K562 (cell line): ENCODE measurements at regions of chr3 and their contacts with region 1.

Region 1: DNA sequence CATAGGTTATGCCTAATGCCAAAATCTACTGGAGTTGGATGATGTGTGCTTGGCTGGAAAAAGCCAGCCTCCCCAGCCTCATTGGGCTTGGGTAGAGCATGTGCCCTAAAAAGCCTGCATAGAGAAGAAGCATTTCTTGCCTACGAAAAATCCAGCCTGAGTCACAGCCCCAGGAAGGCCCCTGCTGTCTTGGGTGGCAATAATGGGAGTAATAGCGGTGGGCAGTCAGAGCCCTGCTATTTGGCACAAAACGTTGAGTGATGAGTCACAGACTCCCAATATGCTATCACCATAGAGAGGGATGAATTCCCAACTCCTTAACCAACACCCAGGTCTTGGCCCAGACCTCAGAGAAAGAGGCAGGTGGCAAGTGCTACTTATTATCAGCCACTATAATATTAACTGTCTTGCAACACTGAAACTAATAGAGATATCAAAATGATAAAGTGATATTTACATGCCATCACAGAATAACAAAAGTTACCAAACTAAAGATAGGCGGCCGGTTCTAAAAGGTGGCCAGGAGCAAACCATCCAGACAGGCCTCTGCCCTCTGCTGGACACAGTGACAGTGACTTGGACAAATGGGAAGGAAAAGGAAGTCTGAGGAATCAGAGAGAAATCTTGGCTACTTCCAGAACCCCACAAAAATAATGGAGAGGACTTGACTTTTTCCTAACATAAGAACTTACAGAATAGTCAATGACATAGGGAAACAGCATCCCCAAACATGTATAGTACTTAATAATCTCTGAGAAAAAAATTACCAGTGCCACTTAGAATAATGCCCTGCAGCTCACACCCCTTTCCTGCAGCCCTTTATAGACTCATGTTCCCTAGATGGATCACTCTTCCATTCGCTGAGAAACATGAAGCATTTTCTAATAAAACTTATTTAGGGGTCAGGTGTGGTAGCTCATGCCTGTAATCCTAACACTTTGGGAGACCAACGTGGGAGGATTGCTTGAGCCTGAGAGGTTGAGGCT is 51.9 kb upstream of the MUC13 start:
- DNase-seq: peak in 3 of 4 experiments; percentile 11 to 23 (median 17)
- ATAC-seq: peak; percentile 69; the same call in 2 of the 3 replicates
- H3K4me3 ChIP-seq: no peak overlapping the region
- H3K27ac ChIP-seq: no peak overlapping the region
- H3K4me1 ChIP-seq: no peaks in the 10 kb centered on the region
- H3K27me3 ChIP-seq: peaks cover 4 to 12% of the 10 kb centered on the region in 2 experiments; a peak in 3 of 5 replicates
- CTCF ChIP-seq: peak; percentile 35 to 50 (median 44); a peak in 5 of 6 replicates
- EP300 ChIP-seq: no peak
- POLR2A ChIP-seq: no peak
- RAD21 ChIP-seq: peak in 1 of 2 experiments; percentile 39; a peak in 1 of 4 replicates

Region 2: DNA sequence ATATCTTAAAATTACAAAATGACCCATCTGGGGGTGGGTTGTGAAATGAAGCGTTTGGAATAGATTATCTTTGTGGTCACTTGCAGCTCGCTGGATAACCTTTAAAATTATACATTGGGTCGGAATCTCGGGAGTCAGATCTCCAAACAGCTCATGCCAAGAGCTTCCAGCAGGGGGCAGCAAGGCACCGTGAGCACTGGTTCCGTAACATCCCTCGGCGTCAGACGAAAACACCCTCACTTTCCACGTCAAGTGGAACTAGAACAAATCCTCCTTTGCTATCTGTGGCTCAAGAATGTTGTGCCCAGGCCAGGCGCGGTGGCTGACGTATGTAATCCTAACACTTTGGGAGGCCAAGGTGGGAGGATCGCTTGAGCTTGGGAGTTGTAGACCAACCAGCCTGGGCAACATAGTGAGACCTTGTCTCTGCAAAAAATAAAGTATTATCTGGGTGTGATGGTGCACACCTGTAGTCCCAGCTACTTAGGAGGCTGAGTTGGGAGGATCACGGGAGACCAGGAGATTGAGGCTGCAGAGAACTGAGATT is 225.1 kb before region 1 on chr3:
- CTCF ChIA-PET with region 1: no interaction called
- POLR2A ChIA-PET with region 1: no interaction called
- in situ Hi-C with region 1: no loop called
- intact Hi-C with region 1: loop called (anchors 10 kb)
- DNase-seq: peak; percentile 62 to 77 (median 66)
- ATAC-seq: peak; percentile 91
- H3K4me3 ChIP-seq: no peak overlapping the region
- H3K27ac ChIP-seq: no peak overlapping the region
- H3K4me1 ChIP-seq: no peaks in the 10 kb centered on the region; a peak in 1 of 5 replicates
- H3K27me3 ChIP-seq: no peaks in the 10 kb centered on the region
- CTCF ChIP-seq: peak; percentile 83 to 88 (median 86)
- EP300 ChIP-seq: no peak
- POLR2A ChIP-seq: no peak
- RAD21 ChIP-seq: peak; percentile 81 to 89

Region 3: GRCh38 chr3:124928333-124929202 is 57.9 kb before region 1 on chr3:
- CTCF ChIA-PET with region 1: no interaction called
- POLR2A ChIA-PET with region 1: no interaction called
- in situ Hi-C with region 1: no loop called
- intact Hi-C with region 1: loop called (anchors 5 kb)
- DNase-seq: peak; percentile 12 to 63 (median 16)
- ATAC-seq: peak; percentile 78
- H3K4me3 ChIP-seq: no peak overlapping the region
- H3K27ac ChIP-seq: no peak overlapping the region
- H3K4me1 ChIP-seq: no peaks in the 10 kb centered on the region
- H3K27me3 ChIP-seq: no peaks in the 10 kb centered on the region
- CTCF ChIP-seq: peak; percentile 42 to 68 (median 56); a peak in 5 of 6 replicates
- EP300 ChIP-seq: no peak
- POLR2A ChIP-seq: no peak
- RAD21 ChIP-seq: peak; percentile 51 to 75